BJ (cell line): ENCODE measurements at regions of chr9 and their contacts with region 1.

Region 1: DNA sequence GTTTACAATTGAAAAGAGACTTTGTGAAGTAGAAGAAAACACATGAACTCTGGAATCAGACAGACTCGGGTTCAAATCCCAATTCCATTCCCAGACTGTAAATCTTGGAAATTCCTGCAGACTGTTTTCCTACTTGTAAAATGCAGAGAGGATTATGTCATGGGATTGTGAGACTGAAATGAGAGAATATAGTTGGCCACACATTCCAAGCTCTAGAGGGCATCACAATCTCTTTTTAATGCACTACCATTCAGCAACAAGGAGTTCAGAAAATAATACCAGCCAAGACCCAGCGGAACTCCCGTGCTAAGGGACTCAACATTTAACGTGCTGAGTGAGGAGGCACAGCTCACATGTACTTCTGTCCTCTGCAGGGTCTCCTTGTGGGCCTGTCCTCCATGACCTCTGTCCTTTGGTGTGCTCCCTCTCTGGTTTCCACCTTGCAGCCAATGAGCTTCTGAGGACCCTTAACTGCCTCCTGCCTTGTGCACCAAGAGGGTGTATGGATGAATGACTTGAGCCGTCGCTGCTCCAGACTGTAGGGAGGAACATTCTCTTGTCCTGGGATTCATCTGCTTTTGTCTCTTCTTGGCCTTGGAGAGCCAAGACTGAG is 263.5 kb downstream of the NTRK2 start:
- DNase-seq: no peak
- H3K4me3 ChIP-seq: no peak overlapping the region
- H3K27me3 ChIP-seq: no peaks in the 10 kb centered on the region
- CTCF ChIP-seq: 0 out of 2 replicates have a peak, but pooled peaks have one; percentile 8

Region 2: GRCh38 chr9:84922051-84922450 is 11.0 kb before region 1 on chr9:
- CTCF ChIA-PET with region 1: interaction called, 10 read pairs
- POLR2A ChIA-PET with region 1: no interaction called
- DNase-seq: no peak
- H3K4me3 ChIP-seq: no peak overlapping the region
- H3K27me3 ChIP-seq: no peaks in the 10 kb centered on the region
- CTCF ChIP-seq: no peak